ENCODE measurements at regions of chr1 and their contacts with region 1.

Region 1: GRCh38 chr1:156276966-156277381 is 5.7 kb downstream of the SMG5 start:
- DNase-seq: no peak
- H3K4me3 ChIP-seq: no peak overlapping the region
- CTCF ChIP-seq: no peak

Region 2: DNA sequence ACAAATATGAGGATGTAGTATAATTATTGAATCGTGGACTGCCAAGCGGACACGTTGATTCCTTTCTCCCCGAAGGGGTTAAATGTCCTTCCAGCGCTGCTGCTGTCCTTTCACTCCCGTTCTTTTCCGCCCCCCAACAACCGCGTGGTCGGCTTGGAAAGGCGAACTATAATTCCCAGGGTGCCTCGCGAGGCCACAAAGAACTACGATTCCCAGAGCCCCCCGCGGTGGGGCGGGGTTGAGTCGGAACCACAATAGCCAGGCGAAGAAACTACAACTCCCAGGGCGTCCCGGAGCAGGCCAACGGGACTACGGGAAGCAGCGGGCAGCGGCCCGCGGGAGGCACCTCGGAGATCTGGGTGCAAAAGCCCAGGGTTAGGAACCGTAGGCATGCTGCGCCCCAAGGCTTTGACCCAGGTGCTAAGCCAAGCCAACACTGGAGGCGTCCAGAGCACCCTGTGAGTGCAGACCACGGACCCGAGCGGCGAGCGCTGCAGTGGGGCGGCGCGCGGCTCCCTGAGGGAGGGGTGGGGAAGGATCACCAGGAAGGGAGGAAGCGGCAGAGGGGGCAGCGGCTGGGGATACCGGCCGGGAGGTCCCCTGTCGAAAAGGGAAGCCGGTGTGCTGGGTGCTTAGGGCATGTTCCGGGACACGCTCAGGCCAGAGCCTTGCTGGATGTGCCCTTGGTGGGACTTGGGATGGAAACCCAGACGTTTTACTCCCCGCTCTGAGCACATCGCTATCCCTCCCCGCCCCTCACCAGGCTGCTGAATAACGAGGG is 222.3 kb before region 1 on chr1 and contains the start of gene LAMTOR2:
- CTCF ChIA-PET with region 1: no interaction called
- POLR2A ChIA-PET with region 1: no interaction called
- DNase-seq: peak; percentile 67
- H3K4me3 ChIP-seq: peak within 1 kb of the TSS; percentile 99
- CTCF ChIP-seq: no peak

Region 3: DNA sequence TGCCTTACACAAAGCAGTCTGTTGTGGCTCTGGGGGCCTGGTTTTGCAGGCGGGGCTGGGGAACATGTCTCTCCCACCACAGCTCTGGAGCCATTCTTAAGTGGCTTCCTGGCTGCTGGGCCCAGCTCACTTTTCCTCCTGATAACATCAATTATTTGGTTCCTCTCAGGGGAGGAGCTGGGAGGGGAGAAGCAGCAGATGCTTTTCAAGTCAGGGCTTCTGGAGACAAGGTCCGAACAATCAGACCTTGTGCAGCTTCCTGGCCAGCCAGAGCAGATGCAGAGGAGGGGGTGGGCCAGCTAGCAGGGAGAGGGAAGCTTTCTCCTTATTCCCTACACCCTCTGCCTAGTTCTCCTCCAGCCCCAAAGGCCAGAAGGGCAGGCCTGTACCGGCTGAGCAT is 25.4 kb before region 1 on chr1:
- CTCF ChIA-PET with region 1: interaction called, 13 read pairs
- POLR2A ChIA-PET with region 1: no interaction called
- DNase-seq: no peak
- H3K4me3 ChIP-seq: no peak overlapping the region
- CTCF ChIP-seq: no peak

Measured in AG04449 (cell line).